IMR-90 (cell line): ENCODE measurements at regions of chr13 and their contacts with region 1.

Region 1: DNA sequence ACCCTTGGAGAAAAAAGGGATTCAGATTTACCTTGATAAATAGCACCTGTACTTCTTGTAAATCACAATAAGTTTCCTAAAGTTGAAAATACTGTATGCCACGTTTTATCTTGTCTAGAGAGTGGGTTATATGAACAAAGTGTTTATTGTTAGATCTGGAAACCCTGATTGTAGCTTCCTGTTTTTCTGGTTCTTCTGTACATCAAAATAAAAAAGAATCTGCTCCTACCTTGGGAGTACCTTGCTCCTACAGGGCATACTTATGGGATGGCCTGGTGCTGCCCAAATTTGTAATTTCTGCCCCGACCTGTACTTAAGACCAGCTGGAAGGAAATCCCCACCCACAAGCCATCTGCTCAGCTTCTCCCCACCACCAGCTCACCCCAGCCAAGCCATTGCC is 241.1 kb downstream of the SLC7A1 start:
- DNase-seq: no peak
- ATAC-seq: no peak
- H3K4me3 ChIP-seq: no peak overlapping the region
- H3K27ac ChIP-seq: no peak overlapping the region
- H3K4me1 ChIP-seq: no peaks in the 10 kb centered on the region
- H3K27me3 ChIP-seq: peaks cover 7% of the 10 kb centered on the region
- CTCF ChIP-seq: no peak
- POLR2A ChIP-seq: no peak
- RAD21 ChIP-seq: no peak

Region 2: DNA sequence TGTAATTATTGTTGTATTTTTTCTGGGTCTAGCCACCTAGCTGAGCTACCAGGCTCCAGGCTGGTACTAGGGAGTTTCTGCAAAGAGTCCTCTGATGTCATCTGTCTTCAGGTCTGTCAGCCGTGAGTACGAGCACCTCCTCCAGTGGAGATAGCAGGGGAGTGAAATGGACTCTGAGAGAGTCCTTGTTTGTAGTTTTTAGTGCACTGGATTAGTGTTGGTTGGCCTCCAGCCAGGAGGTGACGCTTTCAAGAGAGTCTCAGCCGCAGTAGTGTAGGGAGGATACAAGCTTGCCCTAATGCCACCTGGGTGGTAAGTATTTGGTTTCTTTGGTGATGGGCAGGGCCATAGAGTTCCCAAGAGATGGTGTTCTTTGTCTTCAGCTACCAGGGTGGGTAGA is 143.7 kb before region 1 on chr13:
- CTCF ChIA-PET with region 1: no interaction called
- POLR2A ChIA-PET with region 1: no interaction called
- dilution Hi-C with region 1: no loop called
- in situ Hi-C with region 1: no loop called
- intact Hi-C with region 1: loop called (anchors 2 kb)
- DNase-seq: no peak
- ATAC-seq: no peak
- H3K4me3 ChIP-seq: no peak overlapping the region
- H3K27ac ChIP-seq: no peak overlapping the region
- H3K4me1 ChIP-seq: no peaks in the 10 kb centered on the region
- H3K27me3 ChIP-seq: no peaks in the 10 kb centered on the region
- CTCF ChIP-seq: no peak
- POLR2A ChIP-seq: no peak
- RAD21 ChIP-seq: no peak

Region 3: GRCh38 chr13:30957258-30957943 is 1603.0 kb after region 1 on chr13:
- CTCF ChIA-PET with region 1: no interaction called
- POLR2A ChIA-PET with region 1: no interaction called
- dilution Hi-C with region 1: no loop called
- in situ Hi-C with region 1: no loop called
- intact Hi-C with region 1: no loop called
- DNase-seq: no peak
- ATAC-seq: no peak
- H3K4me3 ChIP-seq: no peak overlapping the region
- H3K27ac ChIP-seq: no peak overlapping the region
- H3K4me1 ChIP-seq: no peaks in the 10 kb centered on the region
- H3K27me3 ChIP-seq: peaks cover 23% of the 10 kb centered on the region
- CTCF ChIP-seq: no peak
- POLR2A ChIP-seq: no peak
- RAD21 ChIP-seq: no peak